MCF 10A (cell line): ENCODE measurements at regions of chr6 and their contacts with region 1.

Region 1: DNA sequence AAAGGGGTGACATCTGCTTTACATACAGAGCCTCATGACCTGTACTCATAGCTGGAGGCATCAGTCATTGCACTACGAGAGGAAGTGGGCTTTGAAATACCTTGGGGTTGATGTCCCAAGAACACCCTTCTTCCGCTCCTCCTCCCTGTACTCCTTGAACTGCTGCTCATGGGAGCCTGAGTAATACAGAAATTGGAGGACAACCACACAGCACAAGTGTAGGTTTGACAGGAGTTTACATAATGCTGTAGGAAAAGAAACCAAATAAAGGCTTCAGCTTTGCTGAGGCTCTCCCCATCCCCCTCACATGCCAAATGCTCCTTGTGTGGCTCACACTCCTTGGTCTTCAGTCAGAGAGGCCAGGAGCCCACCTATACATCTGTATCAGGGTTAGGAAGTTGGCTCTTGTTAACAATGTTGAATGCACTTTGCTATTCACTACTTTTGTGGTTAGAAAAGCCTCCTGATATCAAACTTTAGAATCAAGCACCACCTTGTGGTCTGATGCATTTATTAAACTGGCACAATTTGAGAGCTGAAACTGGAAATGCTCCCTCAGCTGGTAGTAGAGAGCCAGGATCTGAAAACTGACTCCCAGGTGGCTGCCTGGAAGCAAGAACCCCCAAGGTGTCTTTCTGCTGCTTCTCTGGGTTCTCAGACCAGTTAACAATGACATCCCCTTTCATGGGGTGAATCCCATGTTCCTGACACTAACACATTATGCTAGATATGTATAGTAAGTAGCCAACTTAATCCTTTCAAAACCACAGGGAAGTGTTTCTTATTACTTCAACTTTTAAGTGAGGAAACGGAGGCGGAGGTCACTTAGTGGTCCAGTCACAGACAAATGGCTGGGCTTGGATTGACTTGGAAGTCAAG is 56.2 kb upstream of the EDN1 start:
- DNase-seq: peak; percentile 81
- H3K4me3 Mint-ChIP-seq: no peak overlapping the region
- H3K27ac Mint-ChIP-seq: no peak overlapping the region
- H3K4me1 Mint-ChIP-seq: no peaks in the 10 kb centered on the region
- H3K27me3 Mint-ChIP-seq: no peaks in the 10 kb centered on the region
- CTCF ChIP-seq: peak; percentile 74

Region 2: DNA sequence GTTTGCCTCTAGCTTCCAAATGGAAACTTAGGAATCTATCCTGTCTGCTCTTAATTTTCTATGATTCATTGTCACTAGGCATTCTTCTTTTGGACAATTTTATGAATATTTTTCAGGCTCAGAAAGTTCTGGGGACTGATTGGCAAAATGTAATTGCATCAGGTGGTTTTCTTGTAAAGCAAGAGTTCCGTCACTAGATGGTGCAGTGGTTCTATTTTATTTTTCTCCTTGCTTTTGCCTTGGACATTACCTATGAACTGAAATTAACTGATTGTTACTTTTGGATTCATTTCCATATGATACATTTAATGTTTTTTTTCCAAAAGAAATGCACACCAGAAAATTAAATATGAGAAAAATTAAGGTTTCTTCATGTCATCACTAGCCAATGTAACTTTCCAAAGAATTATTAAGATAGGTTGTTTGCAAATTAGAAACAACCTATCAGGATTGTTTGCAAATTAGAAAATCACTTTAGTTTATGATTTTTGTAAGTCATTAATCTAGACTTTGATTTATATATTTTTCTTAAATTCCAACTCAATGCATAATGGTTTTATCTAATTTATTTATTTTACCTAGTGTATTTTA is 648.4 kb before region 1 on chr6:
- CTCF ChIA-PET with region 1: interaction called, 4 read pairs
- POLR2A ChIA-PET with region 1: no interaction called
- intact Hi-C with region 1: loop called (anchors 1 kb)
- DNase-seq: peak; percentile 61
- H3K4me3 Mint-ChIP-seq: no peak overlapping the region
- H3K27ac Mint-ChIP-seq: no peak overlapping the region
- H3K4me1 Mint-ChIP-seq: no peaks in the 10 kb centered on the region
- H3K27me3 Mint-ChIP-seq: no peaks in the 10 kb centered on the region
- CTCF ChIP-seq: peak; percentile 60

Region 3: DNA sequence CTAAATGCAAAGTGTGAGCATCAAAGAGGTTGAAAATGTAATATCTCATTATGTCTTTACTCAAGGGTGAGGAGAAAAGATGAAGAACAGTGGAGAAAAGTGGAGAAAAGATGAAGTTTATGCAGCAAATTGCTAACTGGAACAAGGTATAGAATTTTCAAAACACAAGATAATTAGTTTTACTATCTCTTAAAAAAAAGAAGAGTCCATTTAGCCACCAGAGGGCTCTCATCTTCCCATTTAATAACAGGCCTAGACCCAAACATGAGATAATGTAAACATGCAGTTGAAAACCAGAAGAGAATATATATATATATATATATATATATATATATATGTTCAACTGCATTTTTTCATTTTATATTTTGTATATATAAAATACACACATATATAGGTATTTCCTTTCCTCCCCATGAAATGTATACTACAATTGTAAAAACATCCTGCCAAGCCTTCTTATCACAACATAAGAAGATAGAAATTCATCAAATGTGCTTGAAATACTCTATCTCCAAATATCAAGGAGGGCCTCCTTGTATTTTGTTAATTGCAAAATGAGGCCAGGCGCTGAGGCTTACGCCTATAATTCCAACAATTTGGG is 533.7 kb before region 1 on chr6:
- CTCF ChIA-PET with region 1: interaction called, 7 read pairs
- POLR2A ChIA-PET with region 1: interaction called, 3 read pairs
- intact Hi-C with region 1: loop called (anchors 1 kb)
- DNase-seq: peak; percentile 68
- H3K4me3 Mint-ChIP-seq: no peak overlapping the region
- H3K27ac Mint-ChIP-seq: no peak overlapping the region
- H3K4me1 Mint-ChIP-seq: peaks cover 25% of the 10 kb centered on the region
- H3K27me3 Mint-ChIP-seq: no peaks in the 10 kb centered on the region
- CTCF ChIP-seq: peak; percentile 37

Region 4: GRCh38 chr6:12048609-12049008 is 185.3 kb before region 1 on chr6:
- CTCF ChIA-PET with region 1: no interaction called
- POLR2A ChIA-PET with region 1: no interaction called
- intact Hi-C with region 1: no loop called
- DNase-seq: no peak
- H3K4me3 Mint-ChIP-seq: no peak overlapping the region
- H3K27ac Mint-ChIP-seq: no peak overlapping the region
- H3K4me1 Mint-ChIP-seq: peaks cover 8% of the 10 kb centered on the region
- H3K27me3 Mint-ChIP-seq: no peaks in the 10 kb centered on the region
- CTCF ChIP-seq: no peak

Region 5: GRCh38 chr6:12150812-12151432 is 83.0 kb before region 1 on chr6:
- CTCF ChIA-PET with region 1: interaction called, 32 read pairs
- POLR2A ChIA-PET with region 1: interaction called, 5 read pairs
- intact Hi-C with region 1: loop called (anchors 1 kb)
- DNase-seq: peak; percentile 57
- H3K4me3 Mint-ChIP-seq: no peak overlapping the region
- H3K27ac Mint-ChIP-seq: no peak overlapping the region
- H3K4me1 Mint-ChIP-seq: peaks cover 17% of the 10 kb centered on the region
- H3K27me3 Mint-ChIP-seq: no peaks in the 10 kb centered on the region
- CTCF ChIP-seq: peak; percentile 69

Region 6: DNA sequence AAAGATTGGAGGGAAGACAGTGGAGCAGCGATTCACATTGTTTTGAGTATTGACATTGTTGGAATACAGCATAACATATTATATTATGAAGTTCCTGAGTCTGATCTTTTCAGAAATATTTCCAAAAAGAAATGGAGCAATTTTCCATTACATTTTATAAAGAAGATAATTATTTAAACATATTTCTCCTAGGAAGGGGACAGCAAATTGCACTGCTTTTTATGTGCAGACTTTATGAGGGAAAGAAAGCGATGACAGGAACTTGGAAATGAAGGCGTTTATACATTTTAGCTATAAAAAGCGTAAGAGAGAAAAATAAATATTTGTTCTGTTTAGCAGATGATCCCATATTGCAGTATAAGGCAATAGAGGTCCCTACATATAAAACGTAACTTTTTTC is 60.8 kb before region 1 on chr6:
- CTCF ChIA-PET with region 1: interaction called, 10 read pairs
- POLR2A ChIA-PET with region 1: no interaction called
- intact Hi-C with region 1: no loop called
- DNase-seq: no peak
- H3K4me3 Mint-ChIP-seq: no peak overlapping the region
- H3K27ac Mint-ChIP-seq: no peak overlapping the region
- H3K4me1 Mint-ChIP-seq: no peaks in the 10 kb centered on the region
- H3K27me3 Mint-ChIP-seq: no peaks in the 10 kb centered on the region
- CTCF ChIP-seq: no peak

Region 7: DNA sequence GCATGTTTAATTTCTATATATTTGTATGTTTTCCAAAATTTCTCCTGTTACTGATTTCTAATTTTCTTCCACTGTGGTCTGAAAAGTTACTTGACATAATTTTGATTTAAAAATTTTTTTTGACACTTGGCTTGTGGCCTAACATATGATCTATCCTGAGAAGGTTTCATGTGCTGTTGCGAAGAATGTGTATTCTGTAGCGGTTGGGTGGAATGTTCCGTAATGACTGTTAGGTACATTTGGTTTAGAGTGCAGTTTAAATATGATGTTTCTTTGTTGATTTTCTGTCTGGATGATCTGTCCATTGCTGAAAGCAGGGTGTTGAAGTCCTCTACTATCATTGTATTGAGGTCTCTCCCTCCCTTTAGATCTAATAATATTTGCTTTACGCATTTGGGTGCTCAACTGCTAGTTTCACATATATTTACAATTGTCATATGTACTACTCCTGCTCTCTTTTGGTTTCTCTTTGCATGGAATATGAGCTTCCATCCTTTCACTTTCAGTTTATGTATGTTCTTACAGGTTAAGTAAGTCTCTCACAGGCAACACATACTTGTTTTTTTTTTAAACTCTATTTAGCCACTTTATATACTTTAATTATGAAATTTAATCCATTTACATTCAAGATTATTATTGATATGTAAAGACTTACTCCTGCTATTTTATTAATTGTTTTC is 36.8 kb after region 1 on chr6:
- CTCF ChIA-PET with region 1: no interaction called
- POLR2A ChIA-PET with region 1: no interaction called
- intact Hi-C with region 1: no loop called
- DNase-seq: no peak
- H3K4me3 Mint-ChIP-seq: no peak overlapping the region
- H3K27ac Mint-ChIP-seq: no peak overlapping the region
- H3K4me1 Mint-ChIP-seq: peaks cover 22% of the 10 kb centered on the region
- H3K27me3 Mint-ChIP-seq: no peaks in the 10 kb centered on the region
- CTCF ChIP-seq: no peak

Region 8: DNA sequence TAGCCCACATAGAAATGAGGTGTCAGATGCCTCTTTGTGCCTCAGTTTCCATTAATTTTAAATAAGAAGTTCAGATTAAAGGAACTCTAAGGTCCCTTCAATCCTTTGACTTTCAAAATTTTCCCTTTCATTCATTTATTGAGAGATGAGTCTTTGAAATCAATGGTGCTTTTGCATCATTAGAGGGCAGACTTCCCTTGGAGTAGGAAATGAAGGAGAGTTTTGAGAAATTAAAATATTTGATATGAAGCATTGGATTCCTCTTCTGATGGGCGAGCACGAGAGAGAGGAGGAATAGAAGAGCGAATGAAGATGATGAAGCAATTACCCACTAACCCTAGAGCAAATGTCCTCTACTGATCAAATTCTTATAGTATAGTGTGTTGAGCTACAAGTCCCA is 162.0 kb after region 1 on chr6:
- CTCF ChIA-PET with region 1: no interaction called
- POLR2A ChIA-PET with region 1: no interaction called
- intact Hi-C with region 1: no loop called
- DNase-seq: no peak
- H3K4me3 Mint-ChIP-seq: no peak overlapping the region
- H3K27ac Mint-ChIP-seq: no peak overlapping the region
- H3K4me1 Mint-ChIP-seq: no peaks in the 10 kb centered on the region
- H3K27me3 Mint-ChIP-seq: no peaks in the 10 kb centered on the region
- CTCF ChIP-seq: no peak